Mammary epithelial cell (primary cell): ENCODE measurements at regions of chr20 and their contacts with region 1.

Region 1: DNA sequence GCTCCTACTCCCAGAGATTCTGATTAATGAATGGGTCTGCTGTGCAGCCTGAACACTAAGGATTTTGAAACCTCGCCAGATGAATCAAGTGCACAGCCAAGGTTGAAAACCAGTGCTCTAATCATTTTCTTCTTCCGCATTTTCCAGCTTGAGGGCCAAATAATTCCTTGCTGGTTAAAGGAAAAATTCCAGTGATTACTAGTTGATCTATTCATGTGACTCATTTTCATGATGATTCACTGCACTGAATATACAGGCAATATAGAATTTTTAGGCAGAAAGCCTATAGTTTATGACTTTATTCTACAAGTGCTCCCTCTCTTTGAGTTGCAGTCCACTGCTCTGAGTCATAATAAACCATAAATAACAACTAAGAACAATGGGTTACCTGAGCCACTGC is 80.6 kb upstream of the PROKR2 start:
- DNase-seq: peak; percentile 30
- H3K4me3 ChIP-seq: no peak overlapping the region
- H3K27ac ChIP-seq: no peak overlapping the region
- H3K4me1 ChIP-seq: no peaks in the 10 kb centered on the region
- H3K27me3 ChIP-seq: no peaks in the 10 kb centered on the region
- CTCF ChIP-seq: no peak

Region 2: GRCh38 chr20:5135363-5136012 is 261.9 kb before region 1 on chr20:
- CTCF ChIA-PET with region 1: no interaction called
- dilution Hi-C with region 1: no loop called
- in situ Hi-C with region 1: no loop called
- intact Hi-C with region 1: no loop called
- DNase-seq: no peak
- H3K4me3 ChIP-seq: no peak overlapping the region
- H3K27ac ChIP-seq: no peak overlapping the region
- H3K4me1 ChIP-seq: no peaks in the 10 kb centered on the region
- H3K27me3 ChIP-seq: no peaks in the 10 kb centered on the region
- CTCF ChIP-seq: no peak

Region 3: GRCh38 chr20:5150226-5151076 is 246.9 kb before region 1 on chr20:
- CTCF ChIA-PET with region 1: no interaction called
- dilution Hi-C with region 1: no loop called
- in situ Hi-C with region 1: no loop called
- intact Hi-C with region 1: no loop called
- DNase-seq: no peak
- H3K4me3 ChIP-seq: no peak overlapping the region
- H3K27ac ChIP-seq: no peak overlapping the region
- H3K4me1 ChIP-seq: peaks cover 23% of the 10 kb centered on the region
- H3K27me3 ChIP-seq: no peaks in the 10 kb centered on the region
- CTCF ChIP-seq: no peak

Region 4: GRCh38 chr20:5353624-5354496 is 43.5 kb before region 1 on chr20:
- CTCF ChIA-PET with region 1: no interaction called
- dilution Hi-C with region 1: no loop called
- in situ Hi-C with region 1: no loop called
- intact Hi-C with region 1: loop called (anchors 1 kb)
- DNase-seq: peak; percentile 67
- H3K4me3 ChIP-seq: no peak overlapping the region
- H3K27ac ChIP-seq: no peak overlapping the region
- H3K4me1 ChIP-seq: peaks cover 9% of the 10 kb centered on the region
- H3K27me3 ChIP-seq: no peaks in the 10 kb centered on the region
- CTCF ChIP-seq: no peak

Region 5: DNA sequence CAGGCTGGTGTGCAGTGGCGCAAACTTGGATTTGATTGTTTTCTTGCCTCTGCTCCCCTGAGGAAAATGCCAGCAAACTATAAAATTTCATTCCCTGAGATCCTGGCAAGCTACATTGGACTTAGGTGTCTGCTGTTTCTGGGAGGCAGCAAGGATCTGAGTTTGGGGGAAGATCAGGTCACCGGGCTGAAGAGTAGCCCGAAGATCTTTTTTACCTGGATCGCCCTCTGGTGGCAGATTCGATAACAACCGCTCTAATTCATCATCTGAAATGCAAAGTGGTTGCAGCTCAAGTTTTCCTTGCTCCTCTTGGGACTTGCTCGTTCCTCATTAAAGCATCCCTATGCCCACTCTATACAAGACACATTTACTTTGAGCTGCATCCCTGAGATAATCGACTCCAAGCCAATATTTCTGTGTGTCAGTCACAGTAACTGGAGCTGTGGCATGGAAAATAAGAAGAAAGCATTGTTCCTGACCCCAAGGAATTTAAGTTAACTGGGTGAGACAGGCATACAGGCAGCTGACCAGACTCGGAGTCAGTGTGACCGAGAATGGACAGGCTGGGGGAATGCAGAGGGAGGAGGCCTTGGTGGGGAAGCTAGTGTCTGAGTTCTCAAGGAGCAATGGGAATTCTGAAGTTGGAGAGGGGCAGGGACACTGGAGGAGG is 51.2 kb after region 1 on chr20:
- CTCF ChIA-PET with region 1: no interaction called
- dilution Hi-C with region 1: no loop called
- in situ Hi-C with region 1: no loop called
- intact Hi-C with region 1: no loop called
- DNase-seq: peak; percentile 28
- H3K4me3 ChIP-seq: no peak overlapping the region
- H3K27ac ChIP-seq: no peak overlapping the region
- H3K4me1 ChIP-seq: no peaks in the 10 kb centered on the region
- H3K27me3 ChIP-seq: peaks cover 6% of the 10 kb centered on the region
- CTCF ChIP-seq: peak; percentile 67 to 68